ENCODE measurements at regions of chr1 and their contacts with region 1.

Region 1: DNA sequence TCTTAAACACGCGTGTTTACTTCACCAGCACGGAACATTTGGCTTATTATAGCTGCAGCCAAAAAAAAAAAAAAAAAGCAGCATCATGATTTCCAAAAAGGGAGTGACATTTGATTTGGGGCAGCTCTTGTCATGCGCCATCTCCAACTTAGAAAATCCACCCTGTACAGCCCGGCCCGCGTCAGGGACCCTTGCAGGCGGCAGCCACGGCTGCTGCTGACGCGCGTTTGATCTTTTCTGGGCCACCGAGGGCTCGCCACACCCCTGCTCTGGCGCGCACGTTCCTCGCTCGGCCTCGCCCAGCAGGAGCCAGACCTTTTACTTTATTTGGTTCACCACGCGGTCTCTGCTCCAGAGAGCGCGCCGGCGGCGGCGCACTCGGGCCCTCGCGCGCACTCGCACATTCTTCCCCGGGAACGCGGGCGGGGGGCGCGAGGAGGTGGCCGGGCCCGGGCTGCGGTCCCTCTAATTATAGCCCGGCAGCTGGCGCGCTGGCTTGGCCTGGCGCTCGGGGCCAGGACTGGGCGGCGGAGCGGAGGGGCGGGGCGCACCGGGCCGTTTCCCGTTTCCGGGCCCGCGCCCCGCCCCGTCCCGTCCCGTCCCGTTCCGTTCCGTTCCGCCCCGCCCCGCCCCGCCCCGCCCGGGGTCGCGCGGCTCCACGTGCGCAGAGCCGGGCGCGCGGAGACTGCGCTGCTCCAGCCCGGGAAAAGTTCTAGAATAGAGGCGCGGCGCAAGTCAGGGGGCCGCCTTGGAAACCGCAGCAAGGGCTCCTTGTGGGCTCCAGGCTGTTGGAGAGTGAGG is 10.2 kb downstream of the IRF2BP2 start:
- DNase-seq: peak; percentile 80
- H3K4me3 ChIP-seq: peak overlapping the region; percentile 54 to 59
- H3K27ac ChIP-seq: peak overlapping the region; percentile 100
- H3K4me1 ChIP-seq: peaks cover 7% of the 10 kb centered on the region
- H3K27me3 ChIP-seq: no peaks in the 10 kb centered on the region
- CTCF ChIP-seq: peak in 2 of 4 experiments; percentile 31 to 35
- POLR2A ChIP-seq: peak; percentile 78

Region 2: DNA sequence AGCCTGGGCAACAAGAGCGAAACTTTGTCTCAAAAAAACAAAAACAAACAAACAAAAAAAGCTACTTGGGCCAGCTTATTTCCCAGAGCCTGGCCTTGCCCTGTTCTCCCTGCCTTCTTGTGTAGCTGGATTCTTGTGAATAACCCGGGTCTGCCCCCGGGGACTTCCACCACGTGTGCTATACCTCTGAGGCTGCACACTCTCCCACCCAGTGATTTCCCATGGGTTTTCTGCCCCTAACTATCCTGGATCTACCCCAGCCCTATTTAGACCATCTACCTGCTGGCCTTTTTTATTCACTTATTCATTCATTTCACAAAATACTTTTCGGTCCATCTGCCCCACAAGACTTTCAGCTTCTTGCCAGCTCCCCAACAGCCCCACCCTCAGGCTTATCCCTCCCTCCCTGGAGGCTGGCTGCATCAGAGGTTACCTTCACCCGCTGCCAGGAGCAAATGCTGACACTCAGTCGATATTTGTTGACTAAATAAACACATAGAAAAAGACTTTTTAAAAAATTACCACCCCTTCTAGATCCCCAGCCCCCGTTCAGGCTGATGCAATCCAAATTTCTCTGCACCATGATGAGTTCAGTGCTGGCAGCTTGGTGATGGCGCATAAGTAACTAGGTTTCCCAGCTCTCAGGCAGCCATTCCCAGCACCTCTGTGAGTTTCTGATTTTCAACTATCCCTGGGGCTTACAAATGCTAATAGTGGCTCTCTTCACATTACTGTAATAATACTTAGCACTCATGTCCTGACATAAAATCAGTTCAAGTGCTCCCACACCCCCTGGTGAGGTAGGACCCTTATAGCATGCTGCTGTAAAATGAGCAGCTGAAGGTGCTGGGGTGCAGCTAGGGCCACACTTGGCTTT is 90.1 kb before region 1 on chr1:
- intact Hi-C with region 1: no loop called
- DNase-seq: no peak
- H3K4me3 ChIP-seq: no peak overlapping the region
- H3K27ac ChIP-seq: no peak overlapping the region
- H3K4me1 ChIP-seq: no peaks in the 10 kb centered on the region
- H3K27me3 ChIP-seq: no peaks in the 10 kb centered on the region
- CTCF ChIP-seq: no peak
- POLR2A ChIP-seq: no peak

Region 3: GRCh38 chr1:234533975-234534876 is 65.6 kb before region 1 on chr1:
- intact Hi-C with region 1: loop called (anchors 2 kb)
- DNase-seq: peak; percentile 94
- H3K4me3 ChIP-seq: no peak overlapping the region
- H3K27ac ChIP-seq: peak overlapping the region; percentile 99 to 100
- H3K4me1 ChIP-seq: peaks cover 54% of the 10 kb centered on the region
- H3K27me3 ChIP-seq: no peaks in the 10 kb centered on the region
- CTCF ChIP-seq: no peak
- POLR2A ChIP-seq: no peak

Region 4: DNA sequence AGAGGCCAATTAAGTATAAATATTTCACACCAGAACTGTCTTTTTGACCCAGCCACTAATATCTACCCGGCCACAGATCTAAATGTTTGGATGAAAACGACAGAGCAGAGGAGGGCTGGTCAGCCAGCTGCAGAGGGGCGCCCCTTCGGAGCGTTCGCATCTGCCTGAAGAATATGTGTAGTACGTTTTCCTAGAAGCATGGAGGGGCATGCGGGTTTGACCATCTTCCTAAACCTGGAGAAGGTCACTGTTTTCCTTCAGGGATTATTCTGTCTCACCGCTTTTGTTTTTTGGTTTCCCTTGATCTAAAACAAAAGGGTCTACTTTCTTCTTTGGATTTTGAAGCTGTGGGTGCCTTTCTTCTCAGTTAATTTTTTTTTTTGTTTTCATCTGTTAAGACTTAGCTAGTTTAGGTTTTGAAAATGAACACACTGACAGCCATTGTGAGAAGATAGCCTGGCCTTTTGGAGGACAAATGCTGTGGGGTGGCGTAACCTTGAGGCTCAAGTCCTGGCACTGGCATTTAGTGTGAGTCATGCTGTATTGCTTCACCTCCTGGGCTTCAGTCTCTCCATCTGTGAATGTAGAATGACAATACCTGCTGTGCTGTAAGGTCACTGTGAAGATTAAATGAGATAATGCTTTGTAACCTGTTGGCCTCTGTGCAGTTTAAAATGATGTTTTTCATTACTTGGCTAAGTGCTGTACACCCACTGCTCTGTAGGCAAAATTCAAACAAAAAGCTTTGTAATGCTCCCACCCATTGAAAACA is 84.2 kb after region 1 on chr1:
- intact Hi-C with region 1: no loop called
- DNase-seq: peak; percentile 57
- H3K4me3 ChIP-seq: no peak overlapping the region
- H3K27ac ChIP-seq: no peak overlapping the region
- H3K4me1 ChIP-seq: no peaks in the 10 kb centered on the region
- H3K27me3 ChIP-seq: no peaks in the 10 kb centered on the region
- CTCF ChIP-seq: no peak
- POLR2A ChIP-seq: no peak

Region 5: GRCh38 chr1:235045034-235045720 is 445.4 kb after region 1 on chr1:
- intact Hi-C with region 1: loop called (anchors 5 kb)
- DNase-seq: no peak
- H3K4me3 ChIP-seq: no peak overlapping the region
- H3K27ac ChIP-seq: no peak overlapping the region
- H3K4me1 ChIP-seq: no peaks in the 10 kb centered on the region
- H3K27me3 ChIP-seq: no peaks in the 10 kb centered on the region
- CTCF ChIP-seq: no peak
- POLR2A ChIP-seq: no peak

Region 6: GRCh38 chr1:235504496-235505222 is 904.8 kb after region 1 on chr1:
- intact Hi-C with region 1: loop called (anchors 10 kb)
- DNase-seq: peak; percentile 99
- H3K4me3 ChIP-seq: peak overlapping the region; percentile 67 to 88
- H3K27ac ChIP-seq: peak overlapping the region; percentile 98
- H3K4me1 ChIP-seq: no peaks in the 10 kb centered on the region
- H3K27me3 ChIP-seq: no peaks in the 10 kb centered on the region
- CTCF ChIP-seq: peak; percentile 90 to 99 (median 96)
- POLR2A ChIP-seq: peak; percentile 6